Dendritic cell treated with granulocyte-macrophage colony-stimulating factor and Interleukin-4, amounts not matched to agents 40 ng/mL and 50 ng/mL, for 4 days (primary cell): ENCODE measurements at regions of chr6 and their contacts with region 1.

Region 1: GRCh38 chr6:25962149-25963127 is at the start of gene TRIM38:
- H3K4me3 Mint-ChIP-seq: peak within 1 kb of the TSS; percentile 95
- H3K27ac Mint-ChIP-seq: peak within 1 kb of the TSS; percentile 99
- H3K4me1 Mint-ChIP-seq: peaks cover 69% of the 10 kb centered on the region
- H3K27me3 Mint-ChIP-seq: no peaks in the 10 kb centered on the region

Region 2: GRCh38 chr6:25821341-25821740 is 141.1 kb before region 1 on chr6:
- intact Hi-C with region 1: no loop called
- H3K4me3 Mint-ChIP-seq: no peak overlapping the region
- H3K27ac Mint-ChIP-seq: no peak overlapping the region
- H3K4me1 Mint-ChIP-seq: no peaks in the 10 kb centered on the region
- H3K27me3 Mint-ChIP-seq: peaks cover 3% of the 10 kb centered on the region

Region 3: GRCh38 chr6:25992413-25993037 is 30.1 kb after region 1 on chr6:
- intact Hi-C with region 1: loop called (anchors 2 kb)
- H3K4me3 Mint-ChIP-seq: peak overlapping the region; percentile 93
- H3K27ac Mint-ChIP-seq: peak overlapping the region; percentile 99
- H3K4me1 Mint-ChIP-seq: peaks cover 37% of the 10 kb centered on the region
- H3K27me3 Mint-ChIP-seq: no peaks in the 10 kb centered on the region